CD4-positive, alpha-beta T cell (primary cell): ENCODE measurements at regions of chr17 and their contacts with region 1.

Region 1: DNA sequence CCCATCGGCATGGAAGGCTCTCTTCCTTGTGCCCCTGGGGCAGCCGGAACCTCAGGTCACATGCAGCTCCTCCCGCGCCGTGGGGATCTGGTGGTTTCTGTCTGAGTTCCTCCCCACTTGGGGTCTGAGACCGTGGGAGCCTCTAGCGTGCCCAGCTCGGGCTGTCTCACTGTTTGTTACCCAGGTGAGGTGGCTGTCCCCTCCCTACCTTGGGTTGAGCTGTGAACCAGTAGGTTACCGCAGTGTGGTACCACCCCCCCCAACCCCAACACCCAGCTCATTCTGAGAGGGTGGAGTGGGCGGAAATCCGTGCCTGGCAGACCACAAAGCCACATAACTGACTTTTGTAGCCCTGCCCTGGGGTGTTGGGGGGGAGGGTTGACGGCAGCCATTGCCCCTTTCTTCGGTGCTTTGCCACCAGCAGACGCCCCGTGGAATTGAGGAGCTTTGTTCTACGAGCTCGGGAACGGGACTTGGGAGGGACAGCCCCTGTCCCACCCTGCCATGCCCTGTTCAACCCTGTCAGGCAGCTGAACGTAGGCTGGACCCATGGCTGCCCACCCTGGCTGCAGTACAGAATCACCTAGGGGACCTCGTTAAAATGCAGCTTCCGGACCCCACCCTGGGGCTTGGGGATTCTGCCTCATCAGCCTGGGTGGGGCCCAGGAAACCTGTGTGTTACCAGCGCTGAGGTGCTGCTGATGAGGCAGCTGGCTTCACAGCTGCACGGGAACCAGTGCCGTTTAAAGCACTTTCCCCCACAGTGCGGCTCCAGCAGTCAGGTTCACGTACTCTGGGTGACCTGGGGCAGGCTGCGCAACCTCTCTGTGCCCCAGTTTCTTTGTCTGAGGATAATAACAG is 18.5 kb downstream of the RAP1GAP2 start:
- DNase-seq: peak; percentile 88 to 98 (median 93)
- ATAC-seq: peak; percentile 81
- H3K4me3 ChIP-seq: peak overlapping the region; percentile 54
- H3K4me3 Mint-ChIP-seq: peak overlapping the region; percentile 83
- H3K27ac ChIP-seq: peak overlapping the region; percentile 65 to 69
- H3K27ac Mint-ChIP-seq: peak overlapping the region; percentile 97
- H3K4me1 ChIP-seq: peaks cover 63% of the 10 kb centered on the region
- H3K4me1 Mint-ChIP-seq: peaks cover 40% of the 10 kb centered on the region
- H3K27me3 ChIP-seq: no peaks in the 10 kb centered on the region
- H3K27me3 Mint-ChIP-seq: no peaks in the 10 kb centered on the region
- CTCF ChIP-seq: no peak

Region 2: DNA sequence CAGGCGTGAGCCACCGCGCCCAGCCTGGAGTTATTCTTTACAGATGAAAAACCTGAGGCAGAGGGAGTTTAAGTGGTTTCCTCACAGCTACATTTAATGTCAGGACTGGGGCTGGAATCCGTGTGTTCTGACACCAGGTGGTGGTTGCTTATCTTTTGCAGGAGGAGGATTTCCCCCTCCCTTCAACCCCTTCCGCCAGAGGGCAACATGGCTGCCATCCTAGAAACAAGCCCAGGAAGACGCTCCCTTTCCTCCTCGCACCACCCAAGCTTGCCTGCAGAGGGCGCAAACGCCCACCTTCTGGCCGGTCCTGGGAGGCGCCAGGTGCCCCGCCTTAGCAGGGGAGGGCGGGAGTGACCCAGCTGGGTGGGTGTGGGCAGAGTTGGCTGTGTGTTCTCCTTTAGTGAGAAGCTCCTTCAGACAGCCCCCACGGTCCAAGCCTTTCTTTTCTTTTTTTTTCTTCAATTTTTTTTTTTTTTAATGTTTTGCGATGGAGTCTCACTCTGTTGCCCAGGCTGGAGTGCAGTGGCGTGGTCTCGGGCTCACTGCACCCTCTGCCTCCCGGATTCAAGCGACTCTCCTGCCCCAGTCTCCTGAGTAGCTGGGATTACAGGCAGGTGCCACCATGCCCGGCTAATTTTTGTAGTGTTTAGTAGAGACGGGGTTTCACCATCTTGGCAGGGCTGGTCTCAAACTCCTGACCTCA is 28.4 kb before region 1 on chr17:
- CTCF ChIA-PET with region 1: interaction called, 45 read pairs
- POLR2A ChIA-PET with region 1: interaction called, 213 read pairs
- intact Hi-C with region 1: loop called (anchors 2 kb)
- DNase-seq: peak; percentile 81 to 95 (median 88)
- ATAC-seq: peak; percentile 98
- H3K4me3 ChIP-seq: no peak overlapping the region
- H3K4me3 Mint-ChIP-seq: no peak overlapping the region
- H3K27ac ChIP-seq: no peak overlapping the region
- H3K27ac Mint-ChIP-seq: no peak overlapping the region
- H3K4me1 ChIP-seq: peaks cover 26% of the 10 kb centered on the region
- H3K4me1 Mint-ChIP-seq: peaks cover 23% of the 10 kb centered on the region
- H3K27me3 ChIP-seq: no peaks in the 10 kb centered on the region
- H3K27me3 Mint-ChIP-seq: no peaks in the 10 kb centered on the region
- CTCF ChIP-seq: peak; percentile 88

Region 3: GRCh38 chr17:2801841-2802240 is 12.9 kb before region 1 on chr17:
- CTCF ChIA-PET with region 1: interaction called, 18 read pairs
- POLR2A ChIA-PET with region 1: interaction called, 213 read pairs
- intact Hi-C with region 1: no loop called
- DNase-seq: no peak
- ATAC-seq: no peak
- H3K4me3 ChIP-seq: no peak overlapping the region
- H3K4me3 Mint-ChIP-seq: peak overlapping the region; percentile 27
- H3K27ac ChIP-seq: no peak overlapping the region
- H3K27ac Mint-ChIP-seq: no peak overlapping the region
- H3K4me1 ChIP-seq: peaks cover 45% of the 10 kb centered on the region
- H3K4me1 Mint-ChIP-seq: peaks cover 36% of the 10 kb centered on the region
- H3K27me3 ChIP-seq: no peaks in the 10 kb centered on the region
- H3K27me3 Mint-ChIP-seq: no peaks in the 10 kb centered on the region
- CTCF ChIP-seq: no peak

Region 4: DNA sequence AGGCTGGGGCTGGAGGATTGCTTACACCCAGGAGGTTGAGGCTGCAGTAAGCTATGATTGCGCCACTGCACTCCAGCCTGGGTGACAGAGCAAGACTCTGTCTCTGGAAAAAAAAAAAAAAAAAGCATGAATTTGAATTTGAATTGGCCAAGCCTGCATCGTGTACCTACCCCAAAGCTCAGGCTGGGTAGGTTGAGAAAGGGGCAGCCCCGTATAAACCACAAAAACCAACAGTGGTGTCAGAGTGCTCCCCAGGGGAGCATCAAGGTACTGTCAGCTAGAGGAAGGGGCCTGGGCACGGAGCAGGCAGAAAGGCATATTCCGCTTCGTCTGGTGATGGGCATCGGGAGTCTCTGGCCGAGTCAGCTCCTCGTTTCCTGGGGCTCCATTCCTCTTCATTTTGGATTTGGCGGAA is 22.4 kb after region 1 on chr17:
- CTCF ChIA-PET with region 1: interaction called, 19 read pairs
- POLR2A ChIA-PET with region 1: interaction called, 17 read pairs
- intact Hi-C with region 1: loop called in 1 of 2 experiments (anchors 1 kb)
- DNase-seq: peak in 11 of 14 experiments; percentile 14 to 78 (median 43)
- ATAC-seq: peak; percentile 98
- H3K4me3 ChIP-seq: no peak overlapping the region
- H3K4me3 Mint-ChIP-seq: no peak overlapping the region
- H3K27ac ChIP-seq: no peak overlapping the region
- H3K27ac Mint-ChIP-seq: no peak overlapping the region
- H3K4me1 ChIP-seq: peaks cover 7% of the 10 kb centered on the region
- H3K4me1 Mint-ChIP-seq: peaks cover 5% of the 10 kb centered on the region
- H3K27me3 ChIP-seq: no peaks in the 10 kb centered on the region
- H3K27me3 Mint-ChIP-seq: no peaks in the 10 kb centered on the region
- CTCF ChIP-seq: peak; percentile 40

Region 5: GRCh38 chr17:3004133-3004801 is 189.6 kb after region 1 on chr17:
- CTCF ChIA-PET with region 1: no interaction called
- POLR2A ChIA-PET with region 1: interaction called, 11 read pairs
- intact Hi-C with region 1: no loop called
- DNase-seq: peak; percentile 50 to 85 (median 63)
- ATAC-seq: peak; percentile 90
- H3K4me3 ChIP-seq: peak overlapping the region; percentile 53
- H3K4me3 Mint-ChIP-seq: peak overlapping the region; percentile 86
- H3K27ac ChIP-seq: peak overlapping the region in 1 of 2 donors; percentile 55
- H3K27ac Mint-ChIP-seq: peak overlapping the region; percentile 87
- H3K4me1 ChIP-seq: peaks cover 29% of the 10 kb centered on the region
- H3K4me1 Mint-ChIP-seq: peaks cover 34% of the 10 kb centered on the region
- H3K27me3 ChIP-seq: no peaks in the 10 kb centered on the region
- H3K27me3 Mint-ChIP-seq: no peaks in the 10 kb centered on the region
- CTCF ChIP-seq: no peak